ENCODE measurements at regions of chr13 and their contacts with region 1.

Region 1: DNA sequence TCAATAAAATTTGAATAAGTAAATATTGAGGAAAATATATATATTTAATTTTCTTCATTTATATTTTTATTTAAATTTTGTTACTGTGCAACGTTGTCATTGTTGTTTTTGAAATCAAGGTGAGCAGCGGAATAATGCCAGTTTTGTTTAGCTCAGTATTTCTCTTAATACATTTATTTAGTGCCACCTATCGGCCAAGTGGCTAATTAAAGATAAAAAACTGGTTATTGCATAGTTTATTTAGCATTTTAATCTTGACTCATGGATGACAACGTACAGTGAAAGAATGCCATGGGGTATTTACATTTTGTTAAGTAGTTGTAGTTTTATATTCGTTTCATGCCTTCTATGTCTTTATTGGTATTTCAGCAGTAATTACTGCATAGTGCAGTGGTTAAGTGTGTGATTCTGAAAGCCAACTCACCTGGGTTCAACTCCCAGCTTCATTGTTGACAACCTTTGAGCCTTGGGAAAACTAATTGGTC is 265.9 kb downstream of the MYO16 start:
- DNase-seq: no peak
- H3K4me3 ChIP-seq: no peak overlapping the region
- H3K27ac ChIP-seq: no peak overlapping the region
- H3K4me1 ChIP-seq: no peaks in the 10 kb centered on the region
- H3K27me3 ChIP-seq: no peaks in the 10 kb centered on the region
- CTCF ChIP-seq: peak; percentile 44

Region 2: DNA sequence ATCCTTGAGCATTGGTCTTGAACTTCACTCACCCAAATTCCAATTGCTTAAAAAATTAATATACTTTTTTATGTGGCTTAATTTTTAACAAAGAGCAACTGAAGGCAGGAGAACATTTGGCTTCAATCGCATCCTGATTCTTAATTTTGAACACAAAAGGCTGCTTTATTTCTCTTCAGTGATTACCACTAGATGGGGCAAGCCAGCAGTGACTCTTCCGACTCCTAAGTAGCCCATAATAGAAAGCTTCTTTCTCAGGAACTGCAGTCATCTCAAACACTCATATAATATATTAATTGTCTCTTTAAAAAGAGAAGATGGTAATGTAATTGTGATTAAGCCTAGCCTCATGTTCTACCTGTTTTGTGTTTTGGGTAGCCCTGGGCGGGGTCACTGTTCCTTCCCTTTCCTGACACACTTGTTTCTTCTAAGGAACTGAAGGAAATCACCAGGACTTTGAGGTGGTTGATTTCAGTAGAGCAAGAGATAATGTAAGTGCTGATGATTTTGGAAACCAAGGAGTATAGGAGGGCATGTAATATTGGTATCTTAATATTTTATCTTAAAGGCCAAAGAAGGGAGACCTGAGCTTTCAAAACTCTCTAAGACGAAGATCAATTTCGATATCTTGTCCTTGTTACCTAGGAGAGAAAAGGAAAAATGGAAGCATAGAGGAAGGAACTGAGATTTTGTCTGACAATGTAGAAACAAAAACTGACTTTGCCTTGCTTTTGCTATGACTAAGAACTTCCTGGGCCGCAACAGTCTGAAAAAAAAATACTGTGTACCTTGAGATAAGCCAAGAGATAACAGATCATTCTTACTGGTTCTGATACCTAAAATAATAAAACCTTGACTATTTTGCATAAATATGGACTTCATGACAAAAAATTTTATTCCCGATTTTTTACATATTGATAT is 552.6 kb before region 1 on chr13:
- intact Hi-C with region 1: loop called (anchors 5 kb)
- DNase-seq: no peak
- H3K4me3 ChIP-seq: no peak overlapping the region
- H3K27ac ChIP-seq: no peak overlapping the region
- H3K4me1 ChIP-seq: no peaks in the 10 kb centered on the region
- H3K27me3 ChIP-seq: no peaks in the 10 kb centered on the region
- CTCF ChIP-seq: peak; percentile 41

Region 3: DNA sequence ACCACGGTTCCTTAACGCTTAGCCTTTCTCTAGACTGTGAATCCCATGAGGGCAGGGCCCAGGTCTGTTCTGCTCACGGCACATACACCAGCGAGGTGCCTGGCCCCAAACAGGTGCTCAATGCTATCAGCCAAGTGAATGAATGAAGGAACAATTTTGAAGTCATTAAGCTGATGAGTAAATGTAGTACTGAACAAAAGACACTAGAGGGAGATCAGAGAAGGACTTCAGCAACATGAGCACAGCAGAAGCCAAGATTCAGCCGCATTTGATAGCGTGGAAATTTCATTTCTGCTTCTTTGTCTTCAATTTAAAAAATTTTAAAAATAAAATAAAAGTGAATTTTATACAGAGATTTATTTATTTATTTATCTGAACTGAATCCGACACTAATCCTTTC is 285.9 kb before region 1 on chr13:
- intact Hi-C with region 1: loop called (anchors 5 kb)
- DNase-seq: no peak
- H3K4me3 ChIP-seq: no peak overlapping the region
- H3K27ac ChIP-seq: no peak overlapping the region
- H3K4me1 ChIP-seq: no peaks in the 10 kb centered on the region
- H3K27me3 ChIP-seq: no peaks in the 10 kb centered on the region
- CTCF ChIP-seq: no peak

Measured in colonic mucosa (tissue), 4 donors.